Caco-2 (cell line): ENCODE measurements at regions of chr17 and their contacts with region 1.

Region 1: GRCh38 chr17:22533744-22534143 is 841.4 kb downstream of the KCNJ18 start:
- DNase-seq: no peak
- H3K4me3 ChIP-seq: no peak overlapping the region
- H3K4me3 Mint-ChIP-seq: no peak overlapping the region
- H3K27ac Mint-ChIP-seq: no peak overlapping the region
- H3K4me1 ChIP-seq: no peaks in the 10 kb centered on the region
- H3K4me1 Mint-ChIP-seq: no peaks in the 10 kb centered on the region
- H3K27me3 ChIP-seq: no peaks in the 10 kb centered on the region
- H3K27me3 Mint-ChIP-seq: peaks cover 6% of the 10 kb centered on the region
- CTCF ChIP-seq: peak; percentile 13 to 27

Region 2: DNA sequence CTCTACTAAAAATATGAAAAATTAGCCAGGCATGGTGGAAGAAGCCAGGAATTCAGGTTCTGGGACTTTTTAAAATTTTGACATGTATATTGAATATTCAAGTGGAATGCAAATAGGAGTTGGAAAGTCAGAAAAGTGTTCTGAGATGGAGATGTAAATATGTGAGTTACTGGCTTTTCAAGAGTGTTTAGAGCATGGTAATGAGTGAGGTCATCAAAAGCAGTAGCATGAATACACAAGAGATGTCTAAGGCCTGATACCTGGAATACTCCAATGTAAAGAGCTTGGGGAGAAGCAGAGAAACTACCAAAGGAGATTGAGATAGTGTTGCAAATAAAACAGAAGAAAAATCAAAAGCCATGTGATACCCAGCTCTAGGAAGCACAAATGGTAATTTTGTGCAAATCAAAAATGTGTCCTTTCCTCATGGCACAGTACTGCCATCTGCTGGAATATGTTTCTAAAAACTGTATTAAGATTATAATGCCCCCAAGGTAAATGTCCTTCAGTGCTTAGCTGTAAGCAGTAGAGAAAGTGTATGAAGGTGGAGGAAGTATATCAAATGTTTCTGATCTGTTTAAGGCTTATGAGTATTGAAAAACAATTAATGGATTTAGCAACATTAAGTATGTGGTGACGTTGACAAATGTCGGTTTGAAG is 67.0 kb after region 1 on chr17:
- CTCF ChIA-PET with region 1: no interaction called
- POLR2A ChIA-PET with region 1: no interaction called
- intact Hi-C with region 1: loop called (anchors 2 kb)
- DNase-seq: peak in 1 of 2 experiments; percentile 25
- H3K4me3 ChIP-seq: no peak overlapping the region
- H3K4me3 Mint-ChIP-seq: no peak overlapping the region
- H3K27ac Mint-ChIP-seq: no peak overlapping the region
- H3K4me1 ChIP-seq: no peaks in the 10 kb centered on the region
- H3K4me1 Mint-ChIP-seq: no peaks in the 10 kb centered on the region
- H3K27me3 ChIP-seq: no peaks in the 10 kb centered on the region
- H3K27me3 Mint-ChIP-seq: no peaks in the 10 kb centered on the region
- CTCF ChIP-seq: peak; percentile 38 to 49